A549 (cell line): ENCODE measurements at regions of chr6 and their contacts with region 1.

Region 1: DNA sequence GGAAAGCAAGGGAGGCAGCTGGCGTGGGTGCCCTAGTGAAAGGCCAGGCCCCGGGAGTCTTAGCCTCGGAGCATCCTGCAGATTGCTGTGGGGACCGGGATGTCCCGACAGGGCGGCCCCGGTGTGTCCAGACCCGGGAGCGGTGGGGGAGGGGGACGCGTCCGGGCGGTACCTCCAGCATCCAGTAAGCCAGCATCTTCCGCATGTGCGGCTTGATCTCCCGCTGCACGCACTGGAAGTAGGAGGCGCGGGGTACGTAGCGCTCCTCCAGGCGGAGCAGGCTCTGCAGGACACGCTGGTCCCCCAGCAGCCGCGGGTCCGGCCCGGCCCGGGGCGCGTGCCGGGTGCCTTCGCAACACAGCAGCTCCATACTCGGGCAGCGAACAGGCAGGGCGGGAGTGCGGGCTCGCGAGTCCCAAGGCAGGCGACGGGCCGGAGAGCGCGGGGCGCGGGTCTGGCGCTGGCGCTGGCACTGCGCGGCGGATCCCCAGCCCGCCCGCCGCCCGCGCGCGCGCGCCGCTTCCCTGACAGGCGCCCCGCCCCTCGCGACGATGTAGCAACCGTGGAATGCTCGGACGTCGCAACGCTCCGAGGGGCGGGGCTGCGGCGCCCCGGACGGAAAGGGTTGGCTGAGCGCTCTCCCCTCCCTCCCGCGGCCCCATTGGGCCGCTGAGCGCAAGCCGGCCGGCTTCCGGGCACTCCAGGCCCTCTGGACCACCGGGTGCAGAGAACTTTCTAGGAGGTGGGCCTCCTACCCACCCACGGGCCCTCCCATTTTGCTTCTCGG is at the start of gene CCND3:
- DNase-seq: peak; percentile 55 to 88
- ATAC-seq: peak; percentile 84 to 88
- H3K4me3 ChIP-seq: peak within 1 kb of the TSS; percentile 87
- H3K27ac ChIP-seq: peak within 1 kb of the TSS; percentile 93 to 99
- H3K4me1 ChIP-seq: peaks cover 55% of the 10 kb centered on the region
- CTCF ChIP-seq: no peak
- EP300 ChIP-seq: no peak
- POLR2A ChIP-seq: peak; percentile 27; the same call in 1 of the 2 replicates
- RAD21 ChIP-seq: no peak
- polyA plus RNA-seq, gene CCND3: 112 TPM in 2 replicates

Region 2: DNA sequence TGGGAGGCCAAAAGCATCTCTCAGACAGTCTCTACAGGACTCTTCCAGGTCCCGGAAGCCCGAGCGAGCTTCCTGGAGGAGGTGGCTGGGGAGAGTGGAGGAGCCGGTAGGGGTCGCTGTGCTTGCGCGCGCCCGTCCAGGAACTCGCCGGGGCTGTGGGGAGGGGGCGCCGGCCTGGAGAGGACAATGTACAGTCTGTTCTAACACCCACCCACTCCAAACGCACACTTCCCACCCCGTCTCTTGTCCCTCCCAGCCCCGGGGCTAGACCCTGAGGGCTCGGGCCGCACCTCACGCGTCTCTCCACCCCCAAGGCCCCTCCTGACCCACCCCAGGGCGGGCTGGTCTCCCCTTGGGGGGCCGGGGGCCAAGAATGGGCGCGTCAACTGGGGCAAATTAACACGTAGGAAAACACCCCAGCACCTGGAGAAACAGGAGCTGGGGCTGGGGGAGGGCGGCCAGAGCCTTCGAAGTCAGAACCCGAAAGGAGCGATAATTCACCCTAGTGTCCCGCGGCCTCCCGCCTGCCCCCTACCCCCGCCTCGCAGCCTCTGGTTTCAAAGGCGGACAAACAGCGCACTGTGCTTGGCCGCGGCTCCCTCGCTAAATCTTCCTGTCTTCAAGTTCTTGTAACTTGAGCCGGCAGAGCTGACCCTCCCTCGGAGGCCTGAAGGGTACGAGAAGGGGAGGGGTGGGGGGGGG is 498.5 kb before region 1 on chr6:
- CTCF ChIA-PET with region 1: no interaction called
- POLR2A ChIA-PET with region 1: no interaction called
- DNase-seq: no peak
- ATAC-seq: peak in 1 of 2 experiments; percentile 61; a peak in 3 of 6 replicates
- H3K4me3 ChIP-seq: no peak overlapping the region
- H3K27ac ChIP-seq: no peak overlapping the region
- H3K4me1 ChIP-seq: no peaks in the 10 kb centered on the region
- CTCF ChIP-seq: no peak
- EP300 ChIP-seq: no peak
- POLR2A ChIP-seq: no peak
- RAD21 ChIP-seq: no peak

Region 3: DNA sequence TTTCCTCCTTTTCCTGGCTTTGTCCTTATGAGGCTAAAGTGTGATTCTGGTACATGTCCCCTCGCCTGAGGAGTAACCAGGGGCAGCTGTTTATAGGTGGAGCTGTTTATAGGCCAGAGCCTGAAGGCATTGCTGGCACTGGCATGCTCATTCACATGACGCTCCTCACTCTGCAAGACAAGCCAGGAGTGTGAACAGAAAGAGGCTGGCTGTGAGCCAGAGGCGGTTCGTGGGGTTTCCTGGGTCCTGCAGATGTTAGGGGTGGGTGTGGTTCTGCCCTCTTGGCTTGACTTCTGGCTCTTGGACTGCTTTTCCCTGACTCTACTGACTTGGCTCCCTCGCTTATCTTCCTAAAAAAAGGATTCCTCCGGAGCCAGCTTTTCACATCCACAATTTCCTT is 316.0 kb before region 1 on chr6:
- CTCF ChIA-PET with region 1: no interaction called
- POLR2A ChIA-PET with region 1: no interaction called
- DNase-seq: no peak
- ATAC-seq: no peak
- H3K4me3 ChIP-seq: no peak overlapping the region
- H3K27ac ChIP-seq: no peak overlapping the region
- H3K4me1 ChIP-seq: no peaks in the 10 kb centered on the region
- CTCF ChIP-seq: no peak
- EP300 ChIP-seq: no peak
- POLR2A ChIP-seq: no peak
- RAD21 ChIP-seq: no peak

Region 4: DNA sequence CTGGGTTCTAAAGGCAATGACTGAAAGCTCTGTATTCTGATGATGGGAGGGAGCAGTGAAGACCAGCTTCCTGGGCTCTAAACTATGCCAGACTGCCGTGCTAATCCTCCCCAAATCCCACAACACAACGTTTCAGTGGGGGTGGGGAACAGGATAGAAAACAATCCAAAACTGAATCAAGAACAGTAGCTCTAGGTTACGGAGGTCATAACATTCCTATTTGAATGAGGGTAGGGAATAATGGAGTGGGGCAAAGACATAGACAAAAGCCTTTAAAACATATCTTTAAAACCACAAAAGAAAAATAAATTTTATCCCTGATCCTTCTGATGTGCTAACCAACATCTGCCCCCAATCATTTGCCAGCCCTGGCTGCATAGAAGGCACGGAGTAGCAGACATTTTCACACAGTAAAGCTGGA is 54.1 kb before region 1 on chr6:
- CTCF ChIA-PET with region 1: no interaction called
- POLR2A ChIA-PET with region 1: no interaction called
- DNase-seq: no peak
- ATAC-seq: no peak
- H3K4me3 ChIP-seq: no peak overlapping the region
- H3K27ac ChIP-seq: no peak overlapping the region
- H3K4me1 ChIP-seq: peaks cover 2% of the 10 kb centered on the region; the same call in 1 of the 3 replicates
- CTCF ChIP-seq: no peak
- EP300 ChIP-seq: no peak
- POLR2A ChIP-seq: no peak
- RAD21 ChIP-seq: no peak

Region 5: GRCh38 chr6:41920921-41921711 is 20.4 kb before region 1 on chr6 and contains the starts of genes BYSL and MED20:
- CTCF ChIA-PET with region 1: interaction called, 189 read pairs
- POLR2A ChIA-PET with region 1: interaction called, 14 read pairs
- DNase-seq: peak; percentile 86 to 97
- ATAC-seq: peak; percentile 88 to 94
- H3K4me3 ChIP-seq: peak within 1 kb of the TSS; percentile 80
- H3K27ac ChIP-seq: peak within 1 kb of the TSS; percentile 99
- H3K4me1 ChIP-seq: peaks cover 49% of the 10 kb centered on the region
- CTCF ChIP-seq: peak; percentile 81
- EP300 ChIP-seq: no peak
- POLR2A ChIP-seq: no peak; the same call in 1 of the 2 replicates
- RAD21 ChIP-seq: no peak
- polyA plus RNA-seq, gene BYSL: 28.8 and 38.7 TPM in 2 replicates
- polyA plus RNA-seq, gene MED20: 29.3 and 32.9 TPM in 2 replicates

Region 6: GRCh38 chr6:41966961-41967311 is 25.5 kb after region 1 on chr6:
- CTCF ChIA-PET with region 1: interaction called, 11 read pairs
- POLR2A ChIA-PET with region 1: interaction called, 12 read pairs
- DNase-seq: peak; percentile 50 to 84
- ATAC-seq: peak; percentile 65 to 70
- H3K4me3 ChIP-seq: peak overlapping the region; percentile 31; the same call in 2 of the 3 replicates
- H3K27ac ChIP-seq: peak overlapping the region; percentile 95 to 97
- H3K4me1 ChIP-seq: peaks cover 80% of the 10 kb centered on the region
- CTCF ChIP-seq: no peak
- EP300 ChIP-seq: no peak
- POLR2A ChIP-seq: no peak
- RAD21 ChIP-seq: no peak

Region 7: GRCh38 chr6:42050266-42051032 is 109.0 kb after region 1 on chr6 and contains the start of gene TAF8:
- CTCF ChIA-PET with region 1: interaction called, 191 read pairs
- POLR2A ChIA-PET with region 1: interaction called, 3 read pairs
- DNase-seq: peak; percentile 86 to 88
- ATAC-seq: peak; percentile 88 to 91
- H3K4me3 ChIP-seq: peak within 1 kb of the TSS; percentile 52
- H3K27ac ChIP-seq: peak within 1 kb of the TSS; percentile 93 to 96
- H3K4me1 ChIP-seq: peaks cover 33% of the 10 kb centered on the region
- CTCF ChIP-seq: no peak
- EP300 ChIP-seq: no peak
- POLR2A ChIP-seq: peak; percentile 98
- RAD21 ChIP-seq: no peak
- polyA plus RNA-seq, gene TAF8: 18.7 and 20.5 TPM in 2 replicates

Region 8: GRCh38 chr6:42086046-42087035 is 144.9 kb after region 1 on chr6:
- CTCF ChIA-PET with region 1: no interaction called
- POLR2A ChIA-PET with region 1: no interaction called
- DNase-seq: peak; percentile 25 to 41
- ATAC-seq: peak; percentile 57 to 59; a peak in 3 of 6 replicates
- H3K4me3 ChIP-seq: no peak overlapping the region
- H3K27ac ChIP-seq: peak overlapping the region in 1 of 2 experiments; percentile 32; a peak in 1 of 6 replicates
- H3K4me1 ChIP-seq: peaks cover 16% of the 10 kb centered on the region
- CTCF ChIP-seq: no peak
- EP300 ChIP-seq: no peak
- POLR2A ChIP-seq: no peak
- RAD21 ChIP-seq: no peak